Mammary epithelial cell (primary cell): ENCODE measurements at regions of chr20 and their contacts with region 1.

Region 1: DNA sequence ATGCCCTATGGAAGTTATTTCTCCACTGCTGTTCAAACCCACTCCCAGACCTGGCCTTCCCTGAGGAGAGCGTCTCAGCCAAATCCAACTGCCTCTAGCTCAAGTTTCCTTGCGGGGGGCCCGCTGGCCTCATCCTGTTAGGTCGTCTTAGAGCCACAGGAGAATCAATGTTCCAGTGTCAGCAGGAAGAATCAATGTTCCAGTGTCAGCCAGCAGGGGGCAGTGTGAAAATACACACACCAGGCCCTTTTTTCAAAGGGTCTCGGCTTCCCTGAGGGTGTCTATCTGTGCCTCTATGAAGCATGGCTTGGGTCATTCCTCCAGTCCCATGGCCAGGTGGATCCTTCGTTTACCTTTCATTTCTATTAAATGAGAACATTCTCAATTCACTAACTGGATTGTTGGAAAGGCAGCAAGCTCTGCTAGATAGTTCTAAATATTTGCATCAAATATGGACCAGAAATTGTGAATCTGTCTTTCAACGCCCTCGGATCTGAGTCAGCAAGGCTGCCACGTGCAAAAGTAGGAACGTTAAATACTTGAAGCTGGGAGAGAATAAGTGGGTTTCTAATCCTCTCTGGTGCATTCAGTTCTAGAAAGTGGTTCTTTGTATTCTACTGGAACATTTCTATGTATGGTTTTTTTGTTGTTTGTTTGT is 19.2 kb downstream of the PRND start:
- DNase-seq: no peak
- H3K4me3 ChIP-seq: no peak overlapping the region
- H3K27ac ChIP-seq: no peak overlapping the region
- H3K4me1 ChIP-seq: no peaks in the 10 kb centered on the region
- H3K27me3 ChIP-seq: no peaks in the 10 kb centered on the region
- CTCF ChIP-seq: peak; percentile 75

Region 2: DNA sequence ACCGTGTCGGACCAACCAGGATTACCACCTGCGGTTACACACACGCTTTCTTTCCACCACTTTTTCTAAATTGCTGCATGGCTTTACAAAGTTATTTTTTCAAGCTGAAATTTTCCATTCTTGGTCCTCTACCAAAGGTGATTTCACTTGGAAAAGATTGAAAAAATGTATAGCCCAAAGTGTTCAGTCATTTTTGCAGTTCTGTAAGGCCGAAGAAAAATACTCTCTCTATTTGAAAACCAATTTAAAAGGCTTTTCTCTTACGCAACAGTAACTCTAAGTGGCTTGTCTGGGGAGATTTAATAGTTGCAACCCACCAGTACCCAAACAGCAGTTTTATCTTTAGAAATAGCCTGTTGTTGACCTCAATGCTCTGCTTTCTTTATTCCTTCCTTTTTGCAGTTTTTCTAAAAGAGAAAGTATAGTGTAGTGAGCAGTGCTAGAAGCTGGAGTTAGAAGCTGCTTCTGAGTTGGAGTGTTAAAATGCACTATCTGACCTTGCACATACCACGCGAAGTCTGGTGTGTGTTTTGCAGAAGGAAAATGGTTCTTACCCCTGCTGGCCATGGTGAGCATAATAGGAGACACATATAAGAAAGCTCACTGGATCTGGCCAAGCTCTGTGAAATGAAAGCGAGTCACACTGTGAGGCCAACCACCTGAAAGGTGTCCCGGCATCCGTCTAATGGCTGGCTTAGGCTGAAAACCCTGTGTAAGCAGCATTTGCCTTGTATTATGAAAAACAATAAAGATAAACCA is 290.8 kb before region 1 on chr20:
- CTCF ChIA-PET with region 1: no interaction called
- dilution Hi-C with region 1: no loop called
- in situ Hi-C with region 1: no loop called
- intact Hi-C with region 1: no loop called
- DNase-seq: peak; percentile 72
- H3K4me3 ChIP-seq: peak overlapping the region in 1 of 3 experiments; percentile 2
- H3K27ac ChIP-seq: peak overlapping the region; percentile 9
- H3K4me1 ChIP-seq: peaks cover 40% of the 10 kb centered on the region
- H3K27me3 ChIP-seq: no peaks in the 10 kb centered on the region
- CTCF ChIP-seq: peak; percentile 41 to 49

Region 3: GRCh38 chr20:4581838-4582237 is 159.1 kb before region 1 on chr20:
- CTCF ChIA-PET with region 1: no interaction called
- dilution Hi-C with region 1: no loop called
- in situ Hi-C with region 1: no loop called
- intact Hi-C with region 1: no loop called
- DNase-seq: no peak
- H3K4me3 ChIP-seq: no peak overlapping the region
- H3K27ac ChIP-seq: no peak overlapping the region
- H3K4me1 ChIP-seq: peaks cover 14% of the 10 kb centered on the region
- H3K27me3 ChIP-seq: no peaks in the 10 kb centered on the region
- CTCF ChIP-seq: no peak

Region 4: GRCh38 chr20:4674672-4675071 is 66.2 kb before region 1 on chr20:
- CTCF ChIA-PET with region 1: no interaction called
- dilution Hi-C with region 1: loop called (anchors 5 kb)
- in situ Hi-C with region 1: no loop called
- intact Hi-C with region 1: no loop called
- DNase-seq: no peak
- H3K4me3 ChIP-seq: no peak overlapping the region
- H3K27ac ChIP-seq: no peak overlapping the region
- H3K4me1 ChIP-seq: no peaks in the 10 kb centered on the region
- H3K27me3 ChIP-seq: no peaks in the 10 kb centered on the region
- CTCF ChIP-seq: no peak

Region 5: DNA sequence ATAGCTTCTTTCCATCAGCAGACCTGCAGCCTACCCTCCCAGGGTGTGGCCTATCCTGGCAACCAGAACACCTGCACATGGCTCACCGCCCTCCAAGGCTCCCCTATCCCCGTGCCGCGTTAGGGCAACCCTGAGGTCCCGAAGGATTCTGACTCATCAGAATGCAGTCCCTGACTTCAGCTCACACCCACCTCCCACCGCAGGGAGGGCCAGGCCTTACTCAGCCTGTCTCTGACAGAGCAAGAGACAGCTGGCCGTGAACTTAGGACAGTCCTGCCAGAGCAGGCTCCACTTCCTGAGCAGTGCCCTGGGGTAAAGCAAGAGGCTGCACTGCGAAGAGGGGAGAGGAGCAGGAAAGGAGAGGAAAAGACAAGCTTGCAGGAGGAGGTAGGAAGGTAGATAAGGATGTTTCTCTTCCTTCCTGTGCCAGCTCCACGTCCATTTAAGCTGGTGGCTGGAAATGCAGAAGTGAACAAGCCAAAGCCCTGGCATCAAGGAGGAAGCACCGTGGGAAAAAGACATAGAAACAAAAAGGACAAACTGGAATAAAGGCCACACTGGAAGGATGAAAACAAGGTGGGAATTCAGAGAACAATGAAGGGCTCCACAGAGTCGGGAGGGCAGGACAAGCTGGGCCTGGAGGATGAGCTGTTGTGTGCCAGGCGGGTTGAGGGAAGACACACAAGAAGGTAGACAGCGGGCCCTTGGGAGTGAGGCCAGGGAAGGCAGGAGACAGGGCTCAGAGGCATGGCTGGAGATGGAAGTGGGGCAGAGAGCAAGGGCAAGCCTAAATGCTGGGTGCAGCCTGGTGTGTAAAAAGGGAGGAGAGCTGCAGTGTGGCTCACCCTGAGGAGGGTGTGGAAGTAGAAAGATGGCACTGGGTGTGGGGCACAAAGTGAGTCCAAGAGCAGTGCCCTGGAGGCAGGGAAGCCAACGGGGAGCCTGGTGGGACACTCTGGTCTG is 157.7 kb after region 1 on chr20:
- CTCF ChIA-PET with region 1: no interaction called
- dilution Hi-C with region 1: no loop called
- in situ Hi-C with region 1: no loop called
- intact Hi-C with region 1: no loop called
- DNase-seq: peak; percentile 98
- H3K4me3 ChIP-seq: no peak overlapping the region
- H3K27ac ChIP-seq: peak overlapping the region; percentile 45
- H3K4me1 ChIP-seq: peaks cover 28% of the 10 kb centered on the region
- H3K27me3 ChIP-seq: no peaks in the 10 kb centered on the region
- CTCF ChIP-seq: no peak

Region 6: GRCh38 chr20:4949833-4950178 is 208.9 kb after region 1 on chr20:
- CTCF ChIA-PET with region 1: interaction called, 3 read pairs
- dilution Hi-C with region 1: no loop called
- in situ Hi-C with region 1: no loop called
- intact Hi-C with region 1: loop called (anchors 5 kb)
- DNase-seq: peak; percentile 9
- H3K4me3 ChIP-seq: no peak overlapping the region
- H3K27ac ChIP-seq: no peak overlapping the region
- H3K4me1 ChIP-seq: peaks cover 16% of the 10 kb centered on the region
- H3K27me3 ChIP-seq: no peaks in the 10 kb centered on the region
- CTCF ChIP-seq: peak; percentile 49 to 61

Region 7: DNA sequence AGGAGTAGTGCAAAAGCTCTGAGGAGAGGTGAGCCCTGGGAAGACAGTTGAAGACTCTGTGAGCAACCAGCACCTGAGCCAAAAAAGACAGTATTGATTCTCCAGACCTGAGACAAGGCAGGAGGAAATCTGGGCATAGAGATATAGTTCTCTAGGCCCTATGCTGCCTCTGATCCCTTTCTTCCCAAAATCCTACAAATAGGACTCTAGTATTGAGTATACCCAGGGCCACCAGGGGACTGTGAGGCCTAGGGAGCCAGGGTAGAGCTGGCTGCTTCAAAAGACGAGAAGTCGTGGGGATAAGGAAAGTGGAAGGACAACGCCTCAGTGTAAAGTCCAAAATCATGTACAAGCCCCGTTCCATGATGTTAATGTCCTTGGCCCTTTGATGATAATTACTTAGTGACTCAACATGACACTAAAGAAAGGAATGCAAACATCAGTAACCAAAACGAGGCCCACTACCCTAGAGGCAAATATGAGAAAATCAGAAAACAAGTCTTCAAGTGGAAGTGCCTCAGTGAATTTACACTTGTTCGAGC is 773.1 kb after region 1 on chr20:
- CTCF ChIA-PET with region 1: no interaction called
- dilution Hi-C with region 1: no loop called
- in situ Hi-C with region 1: no loop called
- intact Hi-C with region 1: no loop called
- DNase-seq: peak; percentile 40
- H3K4me3 ChIP-seq: no peak overlapping the region
- H3K27ac ChIP-seq: no peak overlapping the region
- H3K4me1 ChIP-seq: peaks cover 5% of the 10 kb centered on the region
- H3K27me3 ChIP-seq: no peaks in the 10 kb centered on the region
- CTCF ChIP-seq: no peak